CD8-positive, alpha-beta memory T cell (primary cell): ENCODE measurements at regions of chr10 and their contacts with region 1.

Region 1: GRCh38 chr10:32005050-32005449 is 51.2 kb downstream of the KIF5B start:
- DNase-seq: peak in 4 of 5 donors; percentile 3 to 22 (median 14)
- H3K4me3 ChIP-seq: no peak overlapping the region
- H3K4me3 Mint-ChIP-seq: no peak overlapping the region
- H3K27ac ChIP-seq: no peak overlapping the region
- H3K27ac Mint-ChIP-seq: peak overlapping the region in 6 of 8 donors; percentile 3 to 78 (median 38)
- H3K4me1 ChIP-seq: no peaks in the 10 kb centered on the region
- H3K4me1 Mint-ChIP-seq: peaks cover 5 to 10% (median 8%) of the 10 kb centered on the region in 3 donors
- H3K27me3 ChIP-seq: no peaks in the 10 kb centered on the region
- H3K27me3 Mint-ChIP-seq: no peaks in the 10 kb centered on the region

Region 2: DNA sequence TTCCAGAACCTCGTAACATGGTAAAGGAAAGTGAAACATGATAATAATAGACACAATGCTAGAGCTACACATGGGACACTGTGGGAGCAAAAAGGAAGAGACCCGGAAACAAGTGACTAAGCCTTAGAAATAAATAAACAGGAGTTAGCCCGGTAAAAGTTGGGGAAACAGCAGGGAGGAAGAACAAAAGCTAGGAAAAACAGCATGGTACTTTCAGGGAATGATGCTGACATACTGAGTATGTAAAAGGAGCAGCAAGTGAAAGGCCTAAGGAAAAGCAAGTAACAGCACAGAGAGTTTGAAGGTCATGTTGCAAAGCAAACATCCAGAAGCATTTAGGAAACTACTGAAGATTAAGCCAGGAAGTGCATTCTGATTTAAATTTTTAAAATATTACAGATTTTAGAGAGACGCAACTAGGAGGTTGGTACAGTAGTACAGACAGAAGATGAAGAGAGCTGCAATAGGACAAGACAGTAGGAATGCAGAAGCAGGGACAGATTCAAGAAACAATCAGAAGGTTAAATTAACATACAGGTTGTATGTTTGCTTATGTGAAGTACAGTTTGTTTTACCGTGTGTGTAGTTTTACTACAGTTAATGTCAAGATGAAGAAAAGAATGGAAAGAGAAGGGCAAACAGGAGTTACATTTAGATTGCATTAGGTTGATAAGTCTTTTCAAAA is 140.1 kb before region 1 on chr10:
- CTCF ChIA-PET with region 1: interaction called, 39 read pairs
- POLR2A ChIA-PET with region 1: no interaction called
- DNase-seq: no peak
- H3K4me3 ChIP-seq: no peak overlapping the region
- H3K4me3 Mint-ChIP-seq: no peak overlapping the region
- H3K27ac ChIP-seq: no peak overlapping the region
- H3K27ac Mint-ChIP-seq: peak overlapping the region in 2 of 8 donors; percentile 36 to 62
- H3K4me1 ChIP-seq: peaks cover 5% of the 10 kb centered on the region
- H3K4me1 Mint-ChIP-seq: peaks cover 33 to 39% (median 37%) of the 10 kb centered on the region in 3 donors
- H3K27me3 ChIP-seq: no peaks in the 10 kb centered on the region
- H3K27me3 Mint-ChIP-seq: no peaks in the 10 kb centered on the region

Region 3: GRCh38 chr10:32112055-32112454 is 107.0 kb after region 1 on chr10:
- CTCF ChIA-PET with region 1: no interaction called
- POLR2A ChIA-PET with region 1: no interaction called
- DNase-seq: no peak
- H3K4me3 ChIP-seq: no peak overlapping the region
- H3K4me3 Mint-ChIP-seq: no peak overlapping the region
- H3K27ac ChIP-seq: no peak overlapping the region
- H3K27ac Mint-ChIP-seq: no peak overlapping the region
- H3K4me1 ChIP-seq: no peaks in the 10 kb centered on the region
- H3K4me1 Mint-ChIP-seq: no peaks in the 10 kb centered on the region
- H3K27me3 ChIP-seq: no peaks in the 10 kb centered on the region
- H3K27me3 Mint-ChIP-seq: peaks cover 17 to 22% of the 10 kb centered on the region in 2 donors